WTC11 (cell line): ENCODE measurements at regions of chr3 and their contacts with region 1.

Region 1: GRCh38 chr3:42961633-42962032 is 17.5 kb upstream of the GASK1A start:
- DNase-seq: peak; percentile 29
- ATAC-seq: peak; percentile 77
- H3K4me3 Mint-ChIP-seq: no peak overlapping the region
- H3K27ac Mint-ChIP-seq: no peak overlapping the region
- H3K4me1 Mint-ChIP-seq: no peaks in the 10 kb centered on the region
- H3K27me3 Mint-ChIP-seq: no peaks in the 10 kb centered on the region; the same call in 1 of the 2 replicates
- CTCF ChIP-seq: no peak

Region 2: DNA sequence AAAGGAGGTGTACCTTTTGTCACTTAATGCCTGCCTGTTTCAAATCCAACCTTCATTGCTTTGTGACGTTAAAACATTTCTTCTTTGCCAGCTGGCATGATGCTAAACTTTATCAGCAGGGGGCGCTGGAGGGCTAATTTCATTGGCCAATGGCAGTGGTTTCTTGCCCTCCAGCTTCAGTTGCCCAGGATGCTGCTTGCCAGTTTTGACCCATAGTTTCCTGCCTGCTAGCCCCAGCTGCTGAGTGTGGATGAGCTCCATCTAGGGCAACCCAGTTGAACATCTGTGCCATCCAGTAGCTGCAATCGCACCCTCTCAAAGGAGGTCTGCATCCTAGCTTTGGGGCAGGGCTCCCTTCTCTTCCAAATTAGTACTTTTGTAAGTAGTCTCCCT is 130.3 kb before region 1 on chr3:
- CTCF ChIA-PET with region 1: interaction called, 11 read pairs
- POLR2A ChIA-PET with region 1: no interaction called
- DNase-seq: peak; percentile 88
- ATAC-seq: peak; percentile 88
- H3K4me3 Mint-ChIP-seq: no peak overlapping the region
- H3K27ac Mint-ChIP-seq: no peak overlapping the region
- H3K4me1 Mint-ChIP-seq: peaks cover 12% of the 10 kb centered on the region
- H3K27me3 Mint-ChIP-seq: no peaks in the 10 kb centered on the region
- CTCF ChIP-seq: peak; percentile 73

Region 3: DNA sequence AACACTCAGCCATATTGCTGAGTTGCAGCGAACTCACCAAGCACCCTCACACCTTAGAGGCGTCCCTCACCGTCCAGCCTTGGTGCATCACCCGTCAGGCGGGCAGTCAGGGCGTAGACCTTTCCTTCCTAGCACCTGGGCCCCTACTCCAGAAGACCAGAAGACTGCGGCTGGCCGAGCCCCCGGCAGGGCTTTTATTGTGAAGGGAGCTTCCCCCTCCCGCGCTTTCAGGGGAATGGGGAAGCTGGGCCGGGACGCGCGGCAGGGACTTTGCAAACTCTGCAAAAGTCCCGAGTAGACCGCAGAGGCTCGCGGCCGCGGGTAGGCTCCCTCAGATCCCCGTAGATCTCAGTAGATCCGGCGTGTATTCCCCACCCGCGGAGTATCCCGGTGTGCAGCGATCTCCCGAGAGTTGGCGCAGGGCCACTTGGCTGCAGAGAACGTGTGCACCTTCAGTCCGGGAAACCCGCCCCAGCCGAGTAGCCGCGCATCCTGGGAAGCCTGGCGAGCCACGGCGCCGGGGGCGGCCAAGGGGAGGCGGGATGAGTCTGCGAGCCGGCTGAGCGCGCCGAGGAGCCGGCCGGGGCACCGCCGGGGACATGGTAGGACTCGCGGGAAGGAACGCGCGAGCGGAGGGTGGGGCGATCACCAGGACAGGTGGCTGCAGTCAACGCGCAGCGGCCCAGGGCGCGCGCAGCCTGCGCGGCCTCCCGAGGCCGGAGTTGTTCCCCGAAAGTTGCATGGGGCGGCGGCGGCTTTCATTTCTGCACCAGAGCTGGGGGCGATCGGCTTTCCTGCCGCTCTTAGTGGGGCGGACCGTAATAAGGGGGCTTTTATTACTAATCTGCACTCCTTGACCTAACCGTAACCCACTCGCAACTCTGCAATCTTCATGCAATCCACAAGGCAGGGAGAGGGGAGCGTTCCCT is 17.7 kb after region 1 on chr3 and contains the start of gene GASK1A:
- CTCF ChIA-PET with region 1: interaction called, 20 read pairs
- POLR2A ChIA-PET with region 1: interaction called, 3 read pairs
- DNase-seq: peak; percentile 77
- ATAC-seq: peak; percentile 73
- H3K4me3 Mint-ChIP-seq: peak within 1 kb of the TSS; percentile 81
- H3K27ac Mint-ChIP-seq: no peak within 1 kb of the TSS; the same call in 1 of the 2 replicates
- H3K4me1 Mint-ChIP-seq: peaks cover 39% of the 10 kb centered on the region
- H3K27me3 Mint-ChIP-seq: peaks cover 51% of the 10 kb centered on the region
- CTCF ChIP-seq: no peak
- total RNA-seq, gene GASK1A: 7.1 to 9.6 TPM (median 7.7 TPM) in 3 replicates

Region 4: GRCh38 chr3:43071313-43071893 is 109.8 kb after region 1 on chr3:
- CTCF ChIA-PET with region 1: interaction called, 65 read pairs
- POLR2A ChIA-PET with region 1: no interaction called
- DNase-seq: peak; percentile 43
- ATAC-seq: peak; percentile 87
- H3K4me3 Mint-ChIP-seq: no peak overlapping the region
- H3K27ac Mint-ChIP-seq: no peak overlapping the region
- H3K4me1 Mint-ChIP-seq: no peaks in the 10 kb centered on the region
- H3K27me3 Mint-ChIP-seq: no peaks in the 10 kb centered on the region; the same call in 1 of the 2 replicates
- CTCF ChIP-seq: peak; percentile 87

Region 5: GRCh38 chr3:43113671-43114070 is 152.0 kb after region 1 on chr3:
- CTCF ChIA-PET with region 1: interaction called, 25 read pairs
- POLR2A ChIA-PET with region 1: no interaction called
- DNase-seq: no peak
- ATAC-seq: no peak
- H3K4me3 Mint-ChIP-seq: no peak overlapping the region
- H3K27ac Mint-ChIP-seq: no peak overlapping the region
- H3K4me1 Mint-ChIP-seq: peaks cover 3% of the 10 kb centered on the region; the same call in 1 of the 2 replicates
- H3K27me3 Mint-ChIP-seq: peaks cover 10% of the 10 kb centered on the region
- CTCF ChIP-seq: no peak

Region 6: GRCh38 chr3:43162230-43163084 is 200.8 kb after region 1 on chr3:
- CTCF ChIA-PET with region 1: interaction called, 62 read pairs
- POLR2A ChIA-PET with region 1: no interaction called
- DNase-seq: peak; percentile 13
- ATAC-seq: peak; percentile 42
- H3K4me3 Mint-ChIP-seq: no peak overlapping the region
- H3K27ac Mint-ChIP-seq: peak overlapping the region; percentile 70
- H3K4me1 Mint-ChIP-seq: peaks cover 21% of the 10 kb centered on the region
- H3K27me3 Mint-ChIP-seq: peaks cover 4% of the 10 kb centered on the region; the same call in 1 of the 2 replicates
- CTCF ChIP-seq: no peak